ENCODE measurements at regions of chr18 and their contacts with region 1.

Region 1: DNA sequence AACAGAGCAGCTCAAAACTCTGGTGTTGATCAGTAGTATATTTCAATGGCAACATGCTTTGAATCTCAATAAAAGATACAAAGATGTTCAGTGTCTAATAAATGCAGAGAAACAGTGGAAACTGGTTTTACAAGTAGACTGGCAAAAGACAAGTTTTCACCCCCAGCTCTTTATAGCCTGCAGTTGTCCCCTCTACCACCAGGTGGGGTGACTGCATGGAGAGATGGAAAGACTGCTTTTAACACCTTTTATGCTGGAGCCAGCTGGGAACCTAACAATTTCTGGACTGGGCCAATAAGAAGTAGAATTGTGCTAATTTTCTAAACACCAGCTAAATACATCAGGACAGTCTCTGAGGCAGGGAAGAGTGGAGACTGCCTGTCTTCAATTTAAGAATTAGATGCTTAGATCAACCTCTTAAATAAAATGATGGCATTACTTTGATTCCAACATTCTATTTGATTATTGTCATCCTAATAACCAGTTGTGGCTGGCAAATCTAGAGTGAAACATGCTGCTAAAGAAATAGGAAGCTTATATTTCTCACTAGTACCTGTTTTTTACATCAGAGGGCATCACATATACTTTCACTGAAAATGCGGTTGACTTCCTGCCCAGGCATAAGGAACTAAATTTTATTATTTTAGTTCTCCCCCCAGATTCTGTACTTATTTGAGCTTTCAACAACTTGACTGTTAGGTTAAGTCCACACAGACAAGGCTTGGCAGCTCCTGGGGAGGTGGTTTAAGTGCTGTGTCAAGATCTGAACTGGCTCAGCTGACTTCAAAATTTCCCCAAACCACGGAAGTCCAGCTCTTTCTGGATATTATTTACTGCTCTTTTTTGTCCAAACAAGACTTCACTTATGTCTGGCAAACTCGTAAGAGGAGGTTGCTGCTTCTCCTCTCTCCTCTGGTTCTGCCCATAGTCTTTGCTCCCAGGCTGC is 140.5 kb downstream of the TPGS2 start:
- DNase-seq: no peak
- ATAC-seq: peak; percentile 28
- H3K4me3 Mint-ChIP-seq: no peak overlapping the region
- H3K27ac Mint-ChIP-seq: no peak overlapping the region
- H3K4me1 Mint-ChIP-seq: no peaks in the 10 kb centered on the region
- H3K27me3 Mint-ChIP-seq: peaks cover 2% of the 10 kb centered on the region
- CTCF ChIP-seq: peak; percentile 81

Region 2: GRCh38 chr18:36284671-36285295 is 403.5 kb before region 1 on chr18:
- CTCF ChIA-PET with region 1: no interaction called
- POLR2A ChIA-PET with region 1: no interaction called
- intact Hi-C with region 1: no loop called
- DNase-seq: no peak
- ATAC-seq: peak; percentile 64
- H3K4me3 Mint-ChIP-seq: no peak overlapping the region
- H3K27ac Mint-ChIP-seq: no peak overlapping the region
- H3K4me1 Mint-ChIP-seq: peaks cover 2% of the 10 kb centered on the region
- H3K27me3 Mint-ChIP-seq: peaks cover 38% of the 10 kb centered on the region
- CTCF ChIP-seq: peak; percentile 72

Region 3: GRCh38 chr18:36809590-36810381 is 121.5 kb after region 1 on chr18:
- CTCF ChIA-PET with region 1: interaction called, 18 read pairs
- POLR2A ChIA-PET with region 1: no interaction called
- intact Hi-C with region 1: loop called (anchors 1 kb)
- DNase-seq: no peak
- ATAC-seq: peak; percentile 83
- H3K4me3 Mint-ChIP-seq: no peak overlapping the region
- H3K27ac Mint-ChIP-seq: no peak overlapping the region
- H3K4me1 Mint-ChIP-seq: peaks cover 2% of the 10 kb centered on the region
- H3K27me3 Mint-ChIP-seq: no peaks in the 10 kb centered on the region
- CTCF ChIP-seq: peak; percentile 65

Region 4: DNA sequence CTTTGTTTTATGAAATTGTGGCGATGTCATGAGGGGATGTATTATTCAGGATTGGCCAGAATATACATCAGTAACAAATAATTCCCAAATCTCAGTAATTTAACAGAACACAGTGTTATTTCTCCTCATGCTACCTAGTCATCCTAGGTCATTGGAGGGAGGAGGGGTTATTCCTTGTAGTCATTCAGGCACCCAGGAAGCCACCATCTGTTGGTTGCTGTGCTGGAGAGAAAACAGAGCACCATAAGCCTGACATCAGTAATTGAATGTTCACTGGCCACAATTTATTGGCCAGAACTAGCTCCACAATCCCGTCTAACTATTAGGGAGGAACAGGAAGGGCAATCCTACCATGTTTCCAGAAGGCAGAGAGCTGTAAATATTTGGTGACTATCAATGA is 1180.8 kb after region 1 on chr18:
- CTCF ChIA-PET with region 1: no interaction called
- POLR2A ChIA-PET with region 1: no interaction called
- intact Hi-C with region 1: no loop called
- DNase-seq: no peak
- ATAC-seq: no peak
- H3K4me3 Mint-ChIP-seq: no peak overlapping the region
- H3K27ac Mint-ChIP-seq: no peak overlapping the region
- H3K4me1 Mint-ChIP-seq: no peaks in the 10 kb centered on the region
- H3K27me3 Mint-ChIP-seq: no peaks in the 10 kb centered on the region
- CTCF ChIP-seq: no peak

Measured in activated B cell treated with CpG ODN at 0.5 μM for 24 hours (primary cell).